BJ (cell line): ENCODE measurements at regions of chr19 and their contacts with region 1.

Region 1: GRCh38 chr19:10403137-10404021 is at the start of gene CDC37:
- DNase-seq: peak; percentile 75
- H3K4me3 ChIP-seq: peak within 1 kb of the TSS; percentile 90
- H3K27me3 ChIP-seq: no peaks in the 10 kb centered on the region; the same call in 1 of the 2 replicates
- CTCF ChIP-seq: no peak
- polyA plus RNA-seq, gene CDC37: 361 and 429 TPM in 2 replicates

Region 2: GRCh38 chr19:10269333-10270179 is 133.8 kb before region 1 on chr19:
- CTCF ChIA-PET with region 1: interaction called, 21 read pairs
- POLR2A ChIA-PET with region 1: no interaction called
- DNase-seq: no peak
- H3K4me3 ChIP-seq: no peak overlapping the region; the same call in 1 of the 2 replicates
- H3K27me3 ChIP-seq: no peaks in the 10 kb centered on the region
- CTCF ChIP-seq: peak; percentile 97

Region 3: GRCh38 chr19:10372690-10373089 is 30.7 kb before region 1 on chr19:
- CTCF ChIA-PET with region 1: no interaction called
- POLR2A ChIA-PET with region 1: no interaction called
- DNase-seq: no peak
- H3K4me3 ChIP-seq: no peak overlapping the region
- H3K27me3 ChIP-seq: no peaks in the 10 kb centered on the region
- CTCF ChIP-seq: no peak

Region 4: GRCh38 chr19:10388957-10389356 is 14.4 kb before region 1 on chr19:
- CTCF ChIA-PET with region 1: interaction called, 42 read pairs
- POLR2A ChIA-PET with region 1: no interaction called
- DNase-seq: no peak
- H3K4me3 ChIP-seq: no peak overlapping the region
- H3K27me3 ChIP-seq: no peaks in the 10 kb centered on the region
- CTCF ChIP-seq: peak; percentile 93

Region 5: GRCh38 chr19:10431943-10432735 is 28.8 kb after region 1 on chr19:
- CTCF ChIA-PET with region 1: interaction called, 321 read pairs
- POLR2A ChIA-PET with region 1: no interaction called
- DNase-seq: no peak
- H3K4me3 ChIP-seq: peak overlapping the region; percentile 59
- H3K27me3 ChIP-seq: peaks cover 7% of the 10 kb centered on the region
- CTCF ChIP-seq: no peak

Region 6: GRCh38 chr19:10517760-10518443 is 114.5 kb after region 1 on chr19:
- CTCF ChIA-PET with region 1: no interaction called
- POLR2A ChIA-PET with region 1: no interaction called
- DNase-seq: no peak
- H3K4me3 ChIP-seq: peak overlapping the region; percentile 30
- H3K27me3 ChIP-seq: peaks cover 27% of the 10 kb centered on the region
- CTCF ChIP-seq: no peak